Ascending aorta (tissue), 2 donors: ENCODE measurements at regions of chr3 and their contacts with region 1.

Region 1: DNA sequence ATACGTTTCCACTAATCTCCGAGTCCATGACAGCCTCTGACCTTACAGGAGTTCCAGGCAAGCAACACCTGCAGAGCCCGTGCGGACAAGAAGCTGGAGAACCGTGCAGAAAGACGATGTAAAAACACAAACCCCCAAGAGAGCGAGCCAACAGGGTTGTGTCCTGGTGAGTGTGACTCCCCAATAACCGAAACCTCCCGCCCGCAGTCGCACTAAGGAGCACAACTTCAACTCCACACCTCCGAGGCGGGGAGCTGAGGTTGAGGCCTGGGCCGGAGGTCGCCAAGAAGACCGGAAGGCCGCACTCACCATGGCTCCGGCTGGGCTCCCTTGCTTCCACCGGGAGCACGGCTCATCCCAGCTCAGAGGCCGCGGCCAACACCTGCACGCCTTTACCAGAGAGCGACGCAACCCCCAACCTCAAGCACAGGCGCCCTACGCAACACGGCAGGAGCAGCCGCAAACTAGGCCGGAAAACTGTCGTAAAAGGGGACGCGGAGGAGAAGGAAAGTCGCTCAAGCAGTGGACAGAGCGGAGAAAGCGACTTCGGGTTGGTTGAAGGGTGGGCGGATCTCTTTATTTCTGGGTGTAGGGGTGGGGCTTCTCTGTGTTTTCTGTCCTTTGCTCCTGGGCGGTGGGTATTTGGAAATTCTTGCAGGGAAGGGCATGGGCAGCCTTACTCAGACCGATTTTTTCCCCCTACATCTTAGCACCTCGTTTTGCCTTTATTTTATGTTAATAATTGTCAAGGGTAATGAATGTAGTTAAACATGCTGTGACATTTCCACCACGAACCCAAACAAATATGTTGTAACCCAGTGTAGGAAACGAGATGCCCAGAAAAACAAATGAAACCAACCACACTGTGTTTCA is at the start of gene DNAJC19:
- DNase-seq: peak; percentile 82 to 95
- H3K4me3 ChIP-seq: peak within 1 kb of the TSS; percentile 75 to 76
- H3K27ac ChIP-seq: peak within 1 kb of the TSS; percentile 80 to 89
- H3K4me1 ChIP-seq: peaks cover 8 to 9% of the 10 kb centered on the region in 2 donors
- H3K27me3 ChIP-seq: no peaks in the 10 kb centered on the region
- CTCF ChIP-seq: no peak
- total RNA-seq, gene DNAJC19: 5.0 TPM

Region 2: DNA sequence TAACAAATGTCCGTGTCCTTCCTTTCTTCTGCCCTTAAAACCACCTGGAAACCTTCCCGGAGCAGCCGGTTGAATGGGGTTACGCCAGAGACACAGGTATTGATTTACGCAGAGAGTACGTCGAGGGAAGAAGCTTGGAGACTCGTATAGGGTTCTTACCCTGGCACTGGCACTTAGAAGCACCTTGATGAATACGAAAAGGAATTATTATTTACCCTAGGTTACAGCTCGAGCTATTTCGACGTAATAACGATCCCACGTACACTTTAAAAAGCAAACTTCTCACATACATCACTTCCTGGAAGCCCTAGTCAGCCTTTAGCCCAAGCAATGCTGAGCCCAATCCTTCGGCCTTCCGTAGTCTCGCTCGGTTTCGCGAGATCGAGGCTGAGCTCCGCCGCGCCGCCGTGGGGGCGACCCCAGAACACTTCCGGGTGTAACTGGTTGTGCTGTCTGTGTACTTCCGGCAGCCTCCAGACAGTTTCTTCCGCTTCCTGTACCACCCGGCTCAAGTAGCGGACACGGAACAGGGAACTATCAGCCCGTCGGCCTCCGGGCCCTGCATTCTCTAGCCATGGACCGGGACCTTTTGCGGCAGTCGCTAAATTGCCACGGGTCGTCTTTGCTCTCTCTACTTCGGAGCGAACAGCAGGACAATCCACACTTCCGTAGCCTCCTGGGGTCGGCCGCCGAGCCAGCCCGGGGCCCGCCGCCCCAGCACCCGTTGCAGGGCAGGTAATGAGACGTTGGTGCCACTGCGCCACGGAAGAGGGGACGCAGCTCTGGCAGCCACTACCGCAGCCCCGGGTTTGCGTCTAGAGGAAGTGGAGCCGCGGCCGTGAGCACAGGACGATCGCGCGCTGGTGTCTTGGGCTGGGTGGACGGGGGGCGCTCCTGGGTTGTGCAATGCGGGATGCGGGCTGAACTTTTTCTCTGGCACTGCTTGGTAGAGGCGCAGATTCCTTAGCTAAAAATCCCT is 387.6 kb before region 1 on chr3 and contains the start of gene TTC14:
- intact Hi-C with region 1: loop called (anchors 10 kb)
- DNase-seq: peak; percentile 55 to 93
- H3K4me3 ChIP-seq: peak within 1 kb of the TSS; percentile 78 to 80
- H3K27ac ChIP-seq: peak within 1 kb of the TSS; percentile 63 to 74
- H3K4me1 ChIP-seq: peaks cover 0 to 4% of the 10 kb centered on the region in 2 donors
- H3K27me3 ChIP-seq: no peaks in the 10 kb centered on the region
- CTCF ChIP-seq: no peak
- total RNA-seq, gene TTC14: 20.6 TPM

Region 3: DNA sequence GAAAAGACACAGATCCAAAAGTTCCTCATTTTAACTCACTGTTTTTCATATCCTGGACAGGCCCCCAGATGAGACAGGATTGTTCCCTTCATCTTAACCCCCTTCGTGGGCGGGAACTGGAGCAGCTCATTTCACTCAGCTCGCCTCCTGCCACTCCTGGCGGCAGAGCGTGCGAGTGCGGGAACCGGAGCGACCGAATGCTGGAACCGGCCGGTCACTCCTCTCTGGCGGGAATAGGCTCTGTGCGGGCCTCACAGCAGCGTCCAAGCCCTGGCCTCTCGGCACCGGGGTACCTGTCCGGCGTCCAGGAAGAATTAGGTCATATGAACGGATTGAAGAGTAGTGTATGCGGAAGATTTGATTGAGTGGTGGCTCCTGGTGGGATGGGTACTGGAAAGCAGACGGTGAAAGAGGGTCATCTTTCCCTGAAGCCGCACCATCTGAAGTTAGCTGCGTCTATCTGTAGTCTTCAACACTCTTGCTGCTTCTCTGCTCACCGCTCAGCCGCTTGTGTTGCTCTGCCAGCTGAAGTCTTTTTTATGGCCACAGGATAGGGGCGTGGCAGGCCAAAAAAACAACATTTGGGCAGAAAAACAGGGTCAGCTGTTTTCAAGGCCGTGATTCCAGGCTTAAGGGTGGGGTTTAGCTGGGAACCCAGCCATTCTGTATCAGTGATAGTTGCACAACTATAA is 119.4 kb before region 1 on chr3:
- intact Hi-C with region 1: loop called (anchors 2 kb)
- DNase-seq: peak in 1 of 2 donors; percentile 72
- H3K4me3 ChIP-seq: peak overlapping the region; percentile 45 to 51
- H3K27ac ChIP-seq: peak overlapping the region; percentile 54 to 72
- H3K4me1 ChIP-seq: peaks cover 0 to 13% of the 10 kb centered on the region in 2 donors
- H3K27me3 ChIP-seq: no peaks in the 10 kb centered on the region
- CTCF ChIP-seq: peak in 1 of 3 experiments; percentile 15

Region 4: DNA sequence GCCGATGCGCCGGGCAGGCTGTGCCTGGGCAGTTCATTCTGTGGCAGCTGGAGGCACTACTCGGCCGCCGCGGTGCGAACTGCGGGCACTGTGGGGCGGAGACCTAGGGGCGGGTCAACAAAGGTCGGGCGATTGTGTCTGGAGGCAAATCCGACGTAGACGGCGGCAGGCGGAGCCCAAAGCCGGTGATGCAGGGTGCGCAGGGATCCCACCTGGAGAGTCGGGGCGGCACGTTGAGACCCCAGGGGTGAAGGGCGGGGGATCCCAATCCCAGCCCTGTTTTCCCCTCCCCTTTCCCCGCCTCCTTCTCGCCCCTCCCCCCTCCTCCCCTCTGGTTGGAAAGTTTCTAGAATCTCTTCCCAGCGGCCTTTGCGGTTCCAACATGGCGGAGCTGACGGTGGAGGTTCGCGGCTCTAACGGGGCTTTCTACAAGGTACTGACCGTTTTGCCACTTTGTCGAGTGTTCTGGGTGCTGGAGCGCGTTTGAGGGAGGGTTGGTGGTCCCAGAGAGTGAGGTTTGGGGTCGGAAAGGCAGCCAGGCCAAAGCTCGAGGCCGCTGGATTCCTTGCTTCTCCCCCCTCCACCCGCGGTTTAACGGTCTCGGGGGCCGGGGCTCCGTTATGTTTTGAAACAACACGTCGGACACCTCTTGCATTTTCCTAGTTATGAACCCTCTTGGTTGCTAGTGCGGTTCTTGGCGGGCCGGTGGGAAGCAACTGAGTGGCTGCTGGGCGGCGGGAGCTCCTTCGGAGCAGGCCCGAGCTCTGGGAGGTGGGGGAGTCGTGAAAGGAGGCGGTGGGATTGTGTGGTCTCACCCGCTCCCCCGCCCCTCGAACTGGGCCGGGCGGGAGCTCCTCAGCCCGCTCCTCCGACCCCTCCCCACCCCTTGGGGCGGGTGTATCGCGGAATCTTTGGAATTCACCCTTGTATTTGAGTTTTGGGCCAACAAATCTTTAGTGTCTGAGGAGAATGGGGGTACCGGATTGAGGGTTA is 76.9 kb before region 1 on chr3 and contains the start of gene FXR1:
- intact Hi-C with region 1: loop called (anchors 5 kb)
- DNase-seq: peak; percentile 73 to 92
- H3K4me3 ChIP-seq: peak within 1 kb of the TSS; percentile 61 to 84
- H3K27ac ChIP-seq: peak within 1 kb of the TSS; percentile 82 to 92
- H3K4me1 ChIP-seq: peaks cover 0 to 18% of the 10 kb centered on the region in 2 donors
- H3K27me3 ChIP-seq: no peaks in the 10 kb centered on the region
- CTCF ChIP-seq: peak; percentile 75 to 91 (median 89)
- total RNA-seq, gene FXR1: 9.6 TPM

Region 5: GRCh38 chr3:181040030-181040429 is 50.5 kb after region 1 on chr3:
- intact Hi-C with region 1: no loop called
- DNase-seq: no peak
- H3K4me3 ChIP-seq: no peak overlapping the region
- H3K27ac ChIP-seq: no peak overlapping the region
- H3K4me1 ChIP-seq: no peaks in the 10 kb centered on the region
- H3K27me3 ChIP-seq: no peaks in the 10 kb centered on the region
- CTCF ChIP-seq: no peak